PC-9 (cell line): ENCODE measurements at regions of chr17 and their contacts with region 1.

Region 1: GRCh38 chr17:62819475-62820212 is 11.5 kb upstream of the MARCHF10 start:
- DNase-seq: peak; percentile 80 to 95
- H3K4me3 ChIP-seq: no peak overlapping the region
- H3K27ac ChIP-seq: peak overlapping the region; percentile 74
- H3K4me1 ChIP-seq: peaks cover 57% of the 10 kb centered on the region
- H3K27me3 ChIP-seq: no peaks in the 10 kb centered on the region
- CTCF ChIP-seq: no peak

Region 2: GRCh38 chr17:62703775-62704378 is 115.8 kb before region 1 on chr17:
- CTCF ChIA-PET with region 1: no interaction called
- POLR2A ChIA-PET with region 1: no interaction called
- intact Hi-C with region 1: loop called (anchors 1 kb)
- DNase-seq: peak in 1 of 2 experiments; percentile 87
- H3K4me3 ChIP-seq: peak overlapping the region; percentile 92
- H3K27ac ChIP-seq: peak overlapping the region; percentile 89
- H3K4me1 ChIP-seq: peaks cover 29% of the 10 kb centered on the region
- H3K27me3 ChIP-seq: no peaks in the 10 kb centered on the region
- CTCF ChIP-seq: peak; percentile 84

Region 3: DNA sequence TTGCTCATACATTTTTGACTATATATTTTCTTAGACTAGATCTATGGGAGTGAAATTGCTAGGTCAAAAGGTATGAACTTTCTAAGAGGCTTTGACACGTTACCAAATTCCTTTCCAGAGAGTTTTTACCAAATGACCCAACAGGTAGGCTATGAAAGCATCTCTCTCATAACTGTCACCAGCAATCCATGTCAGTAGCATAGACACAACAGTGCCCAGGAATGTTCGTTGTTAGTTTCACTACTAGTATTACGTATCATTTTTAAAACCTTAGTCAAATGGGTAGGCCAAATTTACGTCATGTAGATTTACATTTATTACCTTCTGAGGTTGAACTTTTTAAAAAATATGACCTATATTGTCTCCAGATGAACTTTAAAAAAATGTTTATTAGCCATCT is 78.4 kb before region 1 on chr17:
- CTCF ChIA-PET with region 1: no interaction called
- POLR2A ChIA-PET with region 1: no interaction called
- intact Hi-C with region 1: no loop called
- DNase-seq: no peak
- H3K4me3 ChIP-seq: no peak overlapping the region
- H3K27ac ChIP-seq: no peak overlapping the region
- H3K4me1 ChIP-seq: no peaks in the 10 kb centered on the region
- H3K27me3 ChIP-seq: no peaks in the 10 kb centered on the region
- CTCF ChIP-seq: no peak

Region 4: GRCh38 chr17:62800279-62801042 is 19.2 kb before region 1 on chr17:
- CTCF ChIA-PET with region 1: no interaction called
- POLR2A ChIA-PET with region 1: interaction called, 13 read pairs
- intact Hi-C with region 1: loop called (anchors 1 kb)
- DNase-seq: peak; percentile 88 to 98
- H3K4me3 ChIP-seq: peak overlapping the region; percentile 43; the same call in 1 of the 2 replicates
- H3K27ac ChIP-seq: peak overlapping the region; percentile 84
- H3K4me1 ChIP-seq: peaks cover 59% of the 10 kb centered on the region
- H3K27me3 ChIP-seq: no peaks in the 10 kb centered on the region
- CTCF ChIP-seq: no peak

Region 5: DNA sequence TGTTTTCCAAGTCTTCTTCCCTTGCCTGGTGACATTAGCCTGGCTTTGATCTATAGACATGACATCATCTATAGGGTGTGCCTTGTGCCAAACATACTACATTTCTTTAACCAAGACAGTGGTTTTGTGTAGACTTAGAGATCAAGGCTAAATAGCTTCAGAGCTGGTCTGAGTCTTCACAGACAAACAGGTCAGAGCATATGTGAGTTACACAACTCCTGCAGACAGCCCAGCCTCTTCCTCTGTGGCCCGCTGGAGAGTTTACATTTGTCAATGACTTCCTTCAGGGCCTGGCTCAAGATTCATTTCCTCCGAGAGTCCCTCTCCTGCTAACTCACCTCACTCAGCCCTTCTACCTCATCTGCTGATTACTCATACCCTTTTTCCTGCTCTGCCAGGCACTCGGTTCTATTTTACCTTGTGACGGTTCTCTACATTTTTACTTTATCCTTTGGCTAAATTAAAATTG is 73.3 kb after region 1 on chr17:
- CTCF ChIA-PET with region 1: no interaction called
- POLR2A ChIA-PET with region 1: no interaction called
- intact Hi-C with region 1: loop called (anchors 10 kb)
- DNase-seq: peak; percentile 70 to 95
- H3K4me3 ChIP-seq: no peak overlapping the region; the same call in 1 of the 2 replicates
- H3K27ac ChIP-seq: peak overlapping the region; percentile 81
- H3K4me1 ChIP-seq: peaks cover 46% of the 10 kb centered on the region
- H3K27me3 ChIP-seq: no peaks in the 10 kb centered on the region
- CTCF ChIP-seq: no peak

Region 6: DNA sequence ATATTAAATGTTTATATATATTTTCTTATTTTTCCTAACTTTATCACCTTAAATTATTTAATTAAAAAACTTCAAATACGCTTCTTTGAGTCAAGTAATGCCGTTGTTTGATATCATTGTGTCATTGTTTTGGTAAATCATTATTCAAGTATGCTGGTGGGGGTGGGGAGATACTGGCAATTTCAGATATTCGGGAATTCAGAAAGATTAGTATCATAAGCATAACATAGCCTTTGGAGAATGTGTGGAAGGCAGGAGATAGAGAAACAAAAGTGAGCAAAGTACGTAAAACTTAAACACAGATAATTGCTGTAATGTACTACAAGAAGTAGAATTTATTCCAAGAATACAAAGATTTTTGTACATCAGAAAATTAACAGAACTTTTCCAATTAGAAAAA is 196.2 kb after region 1 on chr17:
- CTCF ChIA-PET with region 1: interaction called, 3 read pairs
- POLR2A ChIA-PET with region 1: interaction called, 14 read pairs
- intact Hi-C with region 1: no loop called
- DNase-seq: no peak
- H3K4me3 ChIP-seq: no peak overlapping the region
- H3K27ac ChIP-seq: no peak overlapping the region
- H3K4me1 ChIP-seq: no peaks in the 10 kb centered on the region
- H3K27me3 ChIP-seq: no peaks in the 10 kb centered on the region
- CTCF ChIP-seq: no peak